CD8-positive, alpha-beta T cell (primary cell): ENCODE measurements at regions of chr16 and their contacts with region 1.

Region 1: DNA sequence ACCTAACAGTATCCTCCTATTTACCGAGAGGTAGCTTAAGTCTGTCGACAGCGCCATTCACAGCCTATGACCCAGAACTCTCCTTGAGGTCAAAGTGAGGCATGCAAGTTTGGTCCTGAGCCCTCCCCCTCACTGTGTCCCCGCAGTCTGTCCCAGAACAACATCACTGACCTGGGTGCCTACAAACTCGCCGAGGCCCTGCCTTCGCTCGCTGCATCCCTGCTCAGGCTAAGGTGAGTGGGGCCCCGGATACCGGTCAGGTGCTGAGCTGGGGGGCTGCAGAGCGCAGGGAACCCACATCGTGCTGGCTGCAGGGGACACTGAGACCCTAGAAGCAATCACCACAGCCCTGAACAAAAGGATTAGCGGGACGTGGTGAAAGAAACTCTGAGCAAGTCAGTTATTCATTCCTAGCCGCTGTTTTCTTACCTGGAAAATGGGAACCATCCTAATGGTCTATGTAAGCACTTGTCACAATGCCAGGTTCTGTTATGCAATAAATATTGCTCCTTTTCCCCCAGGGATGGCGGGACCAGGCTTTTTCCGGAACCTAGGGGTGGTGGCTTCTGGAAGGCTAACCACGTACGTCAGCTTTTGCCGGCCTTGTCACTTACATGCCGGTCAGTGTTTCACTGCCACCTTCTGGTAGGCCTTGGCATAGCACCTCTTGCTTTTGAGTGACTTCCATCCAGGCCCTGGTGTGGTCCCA is 23.8 kb downstream of the DEXI start:
- DNase-seq: peak; percentile 62 to 85 (median 79)
- ATAC-seq: peak; percentile 75
- H3K4me3 ChIP-seq: no peak overlapping the region
- H3K4me3 Mint-ChIP-seq: no peak overlapping the region
- H3K27ac ChIP-seq: no peak overlapping the region
- H3K27ac Mint-ChIP-seq: no peak overlapping the region
- H3K4me1 ChIP-seq: no peaks in the 10 kb centered on the region
- H3K4me1 Mint-ChIP-seq: peaks cover 3% of the 10 kb centered on the region
- H3K27me3 ChIP-seq: no peaks in the 10 kb centered on the region
- H3K27me3 Mint-ChIP-seq: no peaks in the 10 kb centered on the region
- CTCF ChIP-seq: peak; percentile 91

Region 2: DNA sequence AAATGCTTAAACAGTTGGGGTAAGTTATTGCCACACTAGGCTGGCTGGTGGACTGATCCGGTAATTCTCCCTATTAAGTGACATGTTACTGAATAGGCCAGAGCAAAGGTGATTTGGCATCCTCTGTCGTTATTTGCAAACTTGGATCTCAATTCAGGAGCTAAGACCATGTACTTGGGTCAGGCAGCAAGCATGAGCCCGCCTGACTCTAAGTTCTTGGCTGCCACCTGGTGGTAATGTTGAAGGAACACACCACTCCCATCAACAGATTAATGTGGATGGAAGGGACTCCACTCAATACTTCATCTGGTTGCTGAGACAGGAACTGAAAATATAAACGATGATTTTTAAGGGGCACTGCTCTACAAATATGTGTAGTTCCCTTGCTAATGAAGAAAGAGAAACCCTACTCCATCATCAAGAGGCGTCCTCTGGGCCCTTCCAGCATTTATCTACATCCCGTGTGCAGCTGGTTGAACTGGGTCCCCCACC is 408.9 kb before region 1 on chr16:
- CTCF ChIA-PET with region 1: interaction called, 12 read pairs
- POLR2A ChIA-PET with region 1: no interaction called
- intact Hi-C with region 1: loop called (anchors 1 to 2 kb)
- DNase-seq: peak; percentile 28 to 85 (median 67)
- ATAC-seq: peak; percentile 87
- H3K4me3 ChIP-seq: no peak overlapping the region
- H3K4me3 Mint-ChIP-seq: no peak overlapping the region
- H3K27ac ChIP-seq: no peak overlapping the region
- H3K27ac Mint-ChIP-seq: no peak overlapping the region
- H3K4me1 ChIP-seq: no peaks in the 10 kb centered on the region
- H3K4me1 Mint-ChIP-seq: peaks cover 2% of the 10 kb centered on the region
- H3K27me3 ChIP-seq: no peaks in the 10 kb centered on the region
- H3K27me3 Mint-ChIP-seq: no peaks in the 10 kb centered on the region
- CTCF ChIP-seq: peak; percentile 75

Region 3: GRCh38 chr16:10668322-10669045 is 250.0 kb before region 1 on chr16:
- CTCF ChIA-PET with region 1: no interaction called
- POLR2A ChIA-PET with region 1: no interaction called
- intact Hi-C with region 1: loop called in 1 of 2 experiments (anchors 2 kb)
- DNase-seq: peak in 2 of 9 experiments; percentile 12 to 23
- ATAC-seq: no peak
- H3K4me3 ChIP-seq: no peak overlapping the region
- H3K4me3 Mint-ChIP-seq: no peak overlapping the region
- H3K27ac ChIP-seq: no peak overlapping the region
- H3K27ac Mint-ChIP-seq: no peak overlapping the region
- H3K4me1 ChIP-seq: no peaks in the 10 kb centered on the region
- H3K4me1 Mint-ChIP-seq: no peaks in the 10 kb centered on the region
- H3K27me3 ChIP-seq: no peaks in the 10 kb centered on the region
- H3K27me3 Mint-ChIP-seq: peaks cover 2% of the 10 kb centered on the region
- CTCF ChIP-seq: no peak

Region 4: DNA sequence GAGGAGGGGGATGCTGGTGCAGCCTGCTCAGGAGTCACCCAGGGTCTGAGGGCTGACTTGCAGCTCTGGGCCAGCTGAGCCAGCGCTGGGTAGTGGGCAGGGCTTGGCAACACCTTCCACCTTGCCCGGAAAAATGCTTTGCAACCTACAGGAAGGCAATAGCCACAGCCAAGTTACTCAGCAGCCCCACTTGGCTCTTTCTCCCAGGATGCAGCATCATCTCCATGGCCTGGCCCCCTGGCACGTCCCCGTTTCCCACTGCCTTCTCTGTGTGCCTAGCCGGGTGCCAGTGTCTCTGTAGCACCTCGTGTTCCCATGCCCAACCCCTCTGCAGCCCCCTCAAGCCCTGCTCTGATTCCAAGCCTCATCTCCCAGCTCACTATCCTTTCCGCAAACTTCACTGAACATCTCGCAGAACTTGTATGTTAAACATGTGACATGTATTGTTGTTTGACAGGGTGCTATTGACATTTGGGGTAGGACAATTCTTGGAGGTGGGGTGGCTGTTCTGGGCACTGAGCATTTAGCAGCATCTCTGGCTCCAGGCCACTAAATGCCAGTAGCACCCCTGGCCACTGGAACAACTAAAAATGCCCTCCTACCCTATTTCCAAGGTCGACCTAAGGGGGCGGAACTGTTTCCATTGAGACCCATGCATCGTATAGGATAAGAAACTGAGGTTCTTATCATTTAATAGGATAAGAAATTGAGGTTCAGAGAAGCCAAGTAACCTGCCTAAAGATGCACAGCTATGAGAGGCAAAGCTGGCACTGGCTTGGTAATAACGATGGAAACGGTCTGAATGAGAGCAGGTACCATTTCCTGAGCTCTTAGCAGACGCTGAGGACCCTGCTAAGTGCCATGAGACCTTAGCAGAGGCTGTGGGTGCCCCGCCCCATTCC is 11.7 kb after region 1 on chr16:
- CTCF ChIA-PET with region 1: interaction called, 20 read pairs
- POLR2A ChIA-PET with region 1: no interaction called
- intact Hi-C with region 1: no loop called
- DNase-seq: no peak
- ATAC-seq: no peak
- H3K4me3 ChIP-seq: no peak overlapping the region
- H3K4me3 Mint-ChIP-seq: no peak overlapping the region
- H3K27ac ChIP-seq: no peak overlapping the region
- H3K27ac Mint-ChIP-seq: peak overlapping the region; percentile 45
- H3K4me1 ChIP-seq: peaks cover 11% of the 10 kb centered on the region
- H3K4me1 Mint-ChIP-seq: peaks cover 29% of the 10 kb centered on the region
- H3K27me3 ChIP-seq: no peaks in the 10 kb centered on the region
- H3K27me3 Mint-ChIP-seq: no peaks in the 10 kb centered on the region
- CTCF ChIP-seq: no peak

Region 5: DNA sequence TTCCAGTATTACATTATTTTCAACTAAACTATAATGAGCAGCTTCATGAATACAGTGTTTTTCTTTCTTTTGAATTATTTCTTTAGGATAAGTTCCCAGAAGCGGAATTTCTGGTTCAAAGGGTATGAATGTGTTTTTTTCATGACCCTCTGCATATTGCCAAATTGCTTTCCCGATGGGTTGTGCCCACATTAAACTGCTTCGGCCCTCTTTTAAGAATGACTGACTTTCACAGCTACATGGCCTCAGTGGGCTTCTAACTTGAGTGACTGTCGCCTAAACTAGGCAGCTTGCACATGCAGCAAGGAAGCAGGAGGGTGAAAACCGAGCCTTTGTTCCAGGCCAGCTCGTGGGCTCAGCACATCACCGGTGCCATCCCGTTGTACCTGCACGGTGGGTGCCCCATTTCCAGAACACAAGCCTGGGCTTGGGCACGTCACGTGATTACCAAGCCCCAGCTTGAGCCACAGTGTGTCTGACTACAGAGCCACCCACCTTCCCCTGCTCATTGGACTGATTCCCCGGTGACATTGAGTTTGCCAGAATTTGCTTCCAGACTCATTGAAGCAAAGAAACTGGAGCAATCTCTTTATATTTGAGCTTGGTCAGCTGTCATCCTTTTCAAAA is 138.7 kb after region 1 on chr16:
- CTCF ChIA-PET with region 1: no interaction called
- POLR2A ChIA-PET with region 1: no interaction called
- intact Hi-C with region 1: no loop called
- DNase-seq: no peak
- ATAC-seq: no peak
- H3K4me3 ChIP-seq: no peak overlapping the region
- H3K4me3 Mint-ChIP-seq: no peak overlapping the region
- H3K27ac ChIP-seq: no peak overlapping the region
- H3K27ac Mint-ChIP-seq: no peak overlapping the region
- H3K4me1 ChIP-seq: peaks cover 8% of the 10 kb centered on the region
- H3K4me1 Mint-ChIP-seq: peaks cover 23% of the 10 kb centered on the region
- H3K27me3 ChIP-seq: no peaks in the 10 kb centered on the region
- H3K27me3 Mint-ChIP-seq: no peaks in the 10 kb centered on the region
- CTCF ChIP-seq: no peak

Region 6: GRCh38 chr16:11145173-11145818 is 226.8 kb after region 1 on chr16:
- CTCF ChIA-PET with region 1: no interaction called
- POLR2A ChIA-PET with region 1: no interaction called
- intact Hi-C with region 1: no loop called
- DNase-seq: no peak
- ATAC-seq: no peak
- H3K4me3 ChIP-seq: no peak overlapping the region
- H3K4me3 Mint-ChIP-seq: no peak overlapping the region
- H3K27ac ChIP-seq: no peak overlapping the region
- H3K27ac Mint-ChIP-seq: no peak overlapping the region
- H3K4me1 ChIP-seq: peaks cover 10% of the 10 kb centered on the region
- H3K4me1 Mint-ChIP-seq: peaks cover 10% of the 10 kb centered on the region
- H3K27me3 ChIP-seq: no peaks in the 10 kb centered on the region
- H3K27me3 Mint-ChIP-seq: no peaks in the 10 kb centered on the region
- CTCF ChIP-seq: no peak